IMR-90 (cell line): ENCODE measurements at regions of chr7 and their contacts with region 1.

Region 1: DNA sequence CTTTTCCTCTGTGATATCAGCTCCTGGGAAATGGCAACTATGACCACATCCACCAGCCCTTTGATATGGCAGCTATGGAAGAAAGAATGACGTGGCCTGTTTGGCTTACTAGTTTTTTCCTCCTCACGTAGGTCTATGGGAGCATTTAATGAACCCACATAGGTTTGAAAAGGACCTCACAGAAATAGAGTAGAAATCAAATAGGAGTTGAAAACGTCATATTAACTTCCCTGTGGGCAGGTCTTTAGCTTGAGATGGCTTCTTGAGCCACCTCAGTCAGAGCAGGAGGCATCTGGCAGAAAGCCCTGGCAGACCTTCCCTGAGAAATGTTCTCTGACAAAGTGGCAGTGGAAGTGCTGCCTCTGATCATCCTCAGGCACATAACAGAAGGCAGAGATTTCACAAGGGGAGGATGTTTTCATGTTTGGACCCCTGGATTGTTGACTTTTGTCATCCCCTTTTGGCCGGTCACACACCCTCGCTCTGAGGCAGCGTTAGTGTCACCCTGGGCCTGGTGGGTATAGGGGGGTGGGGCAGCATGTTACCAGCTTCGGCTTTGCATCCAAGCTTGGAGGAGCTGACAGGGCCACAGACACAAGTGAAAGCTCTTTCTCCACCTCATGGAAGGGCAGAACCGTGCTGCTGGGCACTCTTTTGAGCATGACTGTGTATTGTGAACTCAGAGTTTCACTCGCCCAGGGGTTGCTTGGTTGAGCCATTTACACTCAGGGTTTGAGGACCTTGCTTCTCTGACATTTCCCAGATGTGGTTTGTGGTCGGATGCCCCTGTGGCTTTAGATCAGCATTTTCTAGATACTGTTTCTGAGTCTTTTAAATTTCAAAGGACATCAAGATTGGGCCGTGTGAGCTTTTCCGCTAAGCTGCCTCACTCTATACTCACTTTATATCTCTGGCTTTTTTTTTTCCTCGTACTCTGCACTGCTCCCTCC is 184.2 kb downstream of the STK31 start:
- DNase-seq: no peak
- ATAC-seq: no peak
- H3K4me3 ChIP-seq: no peak overlapping the region
- H3K27ac ChIP-seq: no peak overlapping the region
- H3K4me1 ChIP-seq: no peaks in the 10 kb centered on the region
- H3K27me3 ChIP-seq: no peaks in the 10 kb centered on the region; the same call in 1 of the 2 replicates
- CTCF ChIP-seq: no peak
- POLR2A ChIP-seq: no peak
- RAD21 ChIP-seq: no peak

Region 2: GRCh38 chr7:24318326-24318725 is 424.1 kb after region 1 on chr7:
- CTCF ChIA-PET with region 1: no interaction called
- POLR2A ChIA-PET with region 1: interaction called, 15 read pairs
- dilution Hi-C with region 1: no loop called
- in situ Hi-C with region 1: no loop called
- intact Hi-C with region 1: no loop called
- DNase-seq: no peak
- ATAC-seq: no peak
- H3K4me3 ChIP-seq: no peak overlapping the region
- H3K27ac ChIP-seq: no peak overlapping the region
- H3K4me1 ChIP-seq: no peaks in the 10 kb centered on the region
- H3K27me3 ChIP-seq: no peaks in the 10 kb centered on the region
- CTCF ChIP-seq: peak; percentile 12; the same call in 1 of the 2 replicates
- POLR2A ChIP-seq: no peak
- RAD21 ChIP-seq: no peak